Astrocyte of the cerebellum (primary cell): ENCODE measurements at regions of chr3 and their contacts with region 1.

Region 1: DNA sequence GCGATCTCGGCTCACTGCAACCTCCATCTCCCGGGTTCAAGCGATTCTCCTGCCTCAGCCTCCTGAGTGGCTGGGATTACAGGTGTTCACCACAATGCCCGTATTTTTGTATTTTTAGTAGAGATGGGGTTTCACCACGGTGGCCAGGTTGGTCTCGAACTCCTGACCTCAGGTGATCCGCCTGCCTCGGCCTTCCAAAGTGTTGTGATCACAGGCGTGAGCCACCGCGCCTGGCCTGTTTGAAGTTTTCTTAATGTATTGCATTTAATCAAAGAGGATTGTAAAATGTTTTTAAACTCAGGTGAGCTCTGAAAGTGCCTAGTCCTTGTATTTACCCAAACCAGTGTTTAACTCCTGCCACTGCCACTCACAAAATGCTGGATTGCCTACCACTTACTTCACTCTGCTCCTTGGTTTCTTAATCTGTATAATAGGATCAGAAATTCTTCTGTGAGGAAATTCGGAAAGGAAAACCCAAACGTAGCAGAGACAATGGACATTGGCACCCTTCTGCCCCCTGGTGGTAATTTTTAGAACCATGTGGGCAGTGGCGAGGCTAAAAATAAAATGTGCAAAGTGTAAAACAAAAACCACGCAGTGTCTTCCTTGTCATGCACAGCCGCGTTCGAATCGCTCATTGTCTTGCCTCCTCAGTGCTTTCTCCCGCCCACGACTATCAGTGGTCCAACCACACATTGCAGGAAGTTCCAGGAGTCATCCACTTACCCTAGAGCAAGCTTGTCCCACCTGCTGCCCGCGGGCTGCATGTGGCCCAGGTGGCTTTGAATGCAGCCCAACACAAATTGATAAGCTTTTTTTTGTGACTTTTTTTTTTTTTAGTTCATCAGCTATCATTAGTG is 27.3 kb downstream of the CEP19 start:
- DNase-seq: no peak
- H3K4me3 ChIP-seq: no peak overlapping the region
- CTCF ChIP-seq: peak; percentile 83

Region 2: GRCh38 chr3:196489747-196490146 is 195.0 kb before region 1 on chr3:
- in situ Hi-C with region 1: no loop called
- DNase-seq: no peak
- H3K4me3 ChIP-seq: no peak overlapping the region
- CTCF ChIP-seq: no peak

Region 3: DNA sequence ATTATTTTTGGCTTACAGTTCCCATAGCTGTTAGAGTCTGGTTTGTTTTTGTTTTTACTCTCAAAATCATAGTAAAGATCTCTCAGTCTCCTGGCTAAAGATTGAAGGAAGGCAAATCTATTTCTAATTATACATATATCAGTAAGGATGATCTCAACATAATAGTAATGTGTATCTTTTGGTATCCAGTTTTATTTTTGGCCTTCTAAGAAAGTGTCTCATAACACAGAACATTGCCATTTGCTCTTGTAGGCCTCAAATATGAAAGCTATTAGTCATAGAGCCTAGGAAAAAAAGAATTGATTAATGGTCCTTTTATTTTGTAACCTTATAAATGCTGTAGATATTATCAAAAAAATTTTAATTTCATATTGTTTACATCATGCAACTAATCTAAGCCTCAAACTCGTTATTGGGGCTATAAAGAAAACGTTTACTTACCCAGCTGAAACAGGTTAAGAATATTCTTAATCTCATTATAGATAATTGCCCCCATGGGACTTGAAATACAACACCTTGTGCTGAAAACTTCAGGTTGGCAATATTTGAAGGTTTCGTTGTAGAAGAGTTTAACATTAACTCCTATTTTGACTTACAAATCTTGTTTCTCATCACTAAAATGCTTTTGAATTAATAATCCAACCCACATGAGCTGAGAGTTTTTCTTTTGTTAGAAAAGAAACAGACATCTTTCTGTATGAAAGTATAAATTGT is 99.6 kb before region 1 on chr3:
- in situ Hi-C with region 1: no loop called
- DNase-seq: no peak
- H3K4me3 ChIP-seq: no peak overlapping the region
- CTCF ChIP-seq: no peak

Region 4: GRCh38 chr3:196609343-196609775 is 75.4 kb before region 1 on chr3:
- in situ Hi-C with region 1: loop called (anchors 5 kb)
- DNase-seq: peak; percentile 51
- H3K4me3 ChIP-seq: no peak overlapping the region
- CTCF ChIP-seq: peak; percentile 77